GM12878 (cell line): ENCODE measurements at regions of chr3 and their contacts with region 1.

Region 1: GRCh38 chr3:169931747-169932520 is 20.6 kb downstream of the SAMD7 start:
- DNase-seq: peak; percentile 85
- ATAC-seq: peak; percentile 94
- H3K4me3 ChIP-seq: peak overlapping the region; percentile 18; the same call in 1 of the 2 replicates
- H3K27ac ChIP-seq: peak overlapping the region; percentile 79
- H3K4me1 ChIP-seq: peaks cover 33% of the 10 kb centered on the region
- H3K27me3 ChIP-seq: no peaks in the 10 kb centered on the region
- CTCF ChIP-seq: no peak
- EP300 ChIP-seq: peak in 1 of 2 experiments; percentile 67; a peak in 2 of 4 replicates
- POLR2A ChIP-seq: peak; percentile 48; the same call in 1 of the 2 replicates
- RAD21 ChIP-seq: peak; percentile 22

Region 2: DNA sequence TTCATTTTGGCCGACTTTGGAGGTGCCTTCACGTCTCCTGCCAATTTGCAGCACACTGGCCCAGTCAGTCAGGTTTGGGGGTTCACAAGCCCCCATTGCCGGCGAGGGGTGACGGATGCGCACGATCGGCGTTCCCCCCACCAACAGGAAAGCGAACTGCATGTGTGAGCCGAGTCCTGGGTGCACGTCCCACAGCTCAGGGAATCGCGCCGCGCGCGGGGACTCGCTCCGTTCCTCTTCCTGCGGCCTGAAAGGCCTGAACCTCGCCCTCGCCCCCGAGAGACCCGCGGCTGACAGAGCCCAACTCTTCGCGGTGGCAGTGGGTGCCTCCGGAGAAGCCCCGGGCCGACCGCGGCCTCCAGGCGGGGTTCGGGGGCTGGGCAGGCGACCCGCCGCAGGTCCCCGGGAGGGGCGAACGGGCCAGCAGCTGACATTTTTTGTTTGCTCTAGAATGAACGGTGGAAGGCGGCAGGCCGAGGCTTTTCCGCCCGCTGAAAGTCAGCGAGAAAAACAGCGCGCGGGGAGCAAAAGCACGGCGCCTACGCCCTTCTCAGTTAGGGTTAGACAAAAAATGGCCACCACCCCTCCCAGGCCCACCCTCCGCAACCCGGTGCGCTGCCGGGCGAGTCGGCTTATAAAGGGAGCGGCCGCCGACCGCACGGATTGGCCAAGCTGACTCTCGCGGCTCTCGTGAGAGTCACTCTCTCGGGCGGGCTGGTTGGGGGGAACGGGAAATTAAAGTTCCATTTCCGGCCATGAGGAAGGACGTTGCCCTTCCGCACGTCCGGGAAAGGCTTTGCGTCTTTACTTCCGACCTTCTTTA is 167.3 kb before region 1 on chr3 and contains the start of gene TERC:
- CTCF ChIA-PET with region 1: interaction called, 7 read pairs
- POLR2A ChIA-PET with region 1: interaction called, 3 read pairs
- RAD21 ChIA-PET with region 1: interaction called, 3 read pairs
- SMC1A ChIA-PET with region 1: interaction called, 10 read pairs
- in situ Hi-C with region 1: no loop called
- intact Hi-C with region 1: no loop called
- DNase-seq: peak; percentile 66
- ATAC-seq: peak; percentile 92
- H3K4me3 ChIP-seq: peak within 1 kb of the TSS; percentile 68
- H3K27ac ChIP-seq: peak within 1 kb of the TSS; percentile 71
- H3K4me1 ChIP-seq: no peaks in the 10 kb centered on the region
- H3K27me3 ChIP-seq: no peaks in the 10 kb centered on the region
- CTCF ChIP-seq: no peak
- EP300 ChIP-seq: no peak
- POLR2A ChIP-seq: peak; percentile 82
- RAD21 ChIP-seq: no peak
- polyA plus RNA-seq, gene TERC: not detected

Region 3: DNA sequence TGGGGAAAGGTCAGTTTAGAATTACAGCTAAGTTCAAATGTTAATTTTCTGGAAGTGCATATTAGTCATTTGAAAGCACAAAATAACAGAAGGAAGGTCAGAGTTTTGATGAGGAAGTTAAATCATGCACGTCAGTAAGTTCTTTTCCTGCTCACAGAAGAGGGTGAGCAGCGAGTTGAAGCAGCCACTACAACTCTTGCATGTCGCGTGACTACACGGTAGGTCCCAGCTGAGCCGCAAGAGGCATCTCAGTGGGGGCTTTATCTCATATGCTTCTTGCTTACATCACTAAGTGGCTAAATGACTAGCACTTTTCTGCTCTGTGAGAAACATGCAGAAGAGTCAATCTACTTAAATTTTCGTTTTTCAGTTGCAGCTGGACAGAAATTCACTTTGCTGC is 13.4 kb after region 1 on chr3:
- CTCF ChIA-PET with region 1: interaction called, 12 read pairs
- POLR2A ChIA-PET with region 1: interaction called, 5 read pairs
- RAD21 ChIA-PET with region 1: interaction called, 13 read pairs
- SMC1A ChIA-PET with region 1: interaction called, 45 read pairs
- in situ Hi-C with region 1: no loop called
- intact Hi-C with region 1: no loop called
- DNase-seq: peak; percentile 85
- ATAC-seq: peak; percentile 91
- H3K4me3 ChIP-seq: peak overlapping the region; percentile 48; the same call in 1 of the 2 replicates
- H3K27ac ChIP-seq: peak overlapping the region; percentile 93
- H3K4me1 ChIP-seq: peaks cover 62% of the 10 kb centered on the region
- H3K27me3 ChIP-seq: no peaks in the 10 kb centered on the region
- CTCF ChIP-seq: peak in 1 of 3 experiments; percentile 8; a peak in 1 of 6 replicates
- EP300 ChIP-seq: peak; percentile 98 to 99
- POLR2A ChIP-seq: peak; percentile 45; the same call in 1 of the 2 replicates
- RAD21 ChIP-seq: 0 out of 2 replicates have a peak, but pooled peaks have one; percentile 13

Region 4: DNA sequence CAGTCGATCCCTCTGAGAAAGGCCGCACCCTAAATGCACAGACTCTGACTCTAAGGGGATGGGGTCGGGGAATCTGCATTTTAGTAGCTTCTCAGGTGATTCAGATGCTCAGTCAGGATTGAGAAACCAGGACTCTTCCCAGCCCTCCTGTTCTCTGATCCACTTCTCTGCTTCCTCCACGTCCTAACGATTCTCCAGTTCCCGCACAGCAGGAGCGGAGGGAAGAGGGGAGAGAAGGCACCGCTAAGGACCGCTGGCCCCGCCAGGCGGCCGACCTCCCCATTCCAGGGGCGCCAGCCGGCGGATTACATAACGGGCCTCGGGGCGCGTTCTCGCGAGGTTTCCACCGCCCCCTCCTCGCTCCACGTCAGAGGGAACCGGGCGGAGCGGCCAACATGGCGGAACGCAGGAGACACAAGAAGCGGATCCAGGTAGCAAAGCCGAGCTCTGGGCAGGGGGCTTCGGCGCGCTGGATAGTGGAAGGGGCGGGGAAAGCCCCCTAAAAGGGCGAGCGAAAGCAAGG is 34.6 kb after region 1 on chr3 and contains the start of gene SEC62:
- CTCF ChIA-PET with region 1: interaction called, 81 read pairs
- POLR2A ChIA-PET with region 1: interaction called, 10 read pairs
- RAD21 ChIA-PET with region 1: interaction called, 48 read pairs
- SMC1A ChIA-PET with region 1: interaction called, 118 read pairs
- in situ Hi-C with region 1: no loop called
- intact Hi-C with region 1: loop called (anchors 1 kb)
- DNase-seq: peak; percentile 65
- ATAC-seq: peak; percentile 89
- H3K4me3 ChIP-seq: peak within 1 kb of the TSS; percentile 79
- H3K27ac ChIP-seq: peak within 1 kb of the TSS; percentile 91
- H3K4me1 ChIP-seq: peaks cover 7% of the 10 kb centered on the region; the same call in 1 of the 2 replicates
- H3K27me3 ChIP-seq: no peaks in the 10 kb centered on the region
- CTCF ChIP-seq: peak; percentile 57 to 75 (median 64)
- EP300 ChIP-seq: no peak; a peak in 1 of 4 replicates
- POLR2A ChIP-seq: peak; percentile 95
- RAD21 ChIP-seq: peak; percentile 74
- polyA plus RNA-seq, gene SEC62: 252 to 270 TPM

Region 5: GRCh38 chr3:170055209-170055608 is 123.3 kb after region 1 on chr3:
- CTCF ChIA-PET with region 1: interaction called, 39 read pairs
- POLR2A ChIA-PET with region 1: interaction called, 3 read pairs
- RAD21 ChIA-PET with region 1: interaction called, 9 read pairs
- SMC1A ChIA-PET with region 1: interaction called, 13 read pairs
- in situ Hi-C with region 1: no loop called
- intact Hi-C with region 1: loop called (anchors 1 kb)
- DNase-seq: peak; percentile 63
- ATAC-seq: peak; percentile 73
- H3K4me3 ChIP-seq: peak overlapping the region; percentile 59
- H3K27ac ChIP-seq: peak overlapping the region; percentile 94
- H3K4me1 ChIP-seq: peaks cover 42% of the 10 kb centered on the region
- H3K27me3 ChIP-seq: no peaks in the 10 kb centered on the region
- CTCF ChIP-seq: 0 out of 6 replicates have a peak, but pooled peaks of 1 of the 3 experiments have one; percentile 2
- EP300 ChIP-seq: peak; percentile 35 to 36; a peak in 1 of 4 replicates
- POLR2A ChIP-seq: peak; percentile 24; the same call in 1 of the 2 replicates
- RAD21 ChIP-seq: no peak

Region 6: DNA sequence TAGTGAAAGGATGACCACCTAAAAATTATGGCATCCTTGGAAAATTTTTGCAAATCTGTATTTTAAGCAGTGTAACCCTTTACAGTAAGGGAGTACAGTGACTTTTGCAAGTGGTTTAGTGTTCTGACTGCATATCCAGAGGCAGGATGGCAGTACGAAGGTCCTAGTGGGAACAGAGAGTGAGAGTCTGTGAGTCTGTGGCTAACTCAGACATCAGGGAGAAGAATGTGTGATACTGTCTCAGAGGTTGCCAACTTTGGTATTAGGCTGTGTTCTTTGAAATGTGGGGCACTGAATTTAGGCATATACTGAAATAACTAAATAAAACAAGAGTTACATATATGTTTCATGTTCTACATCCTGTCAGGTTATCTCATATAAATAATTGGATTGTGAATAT is 315.9 kb after region 1 on chr3:
- CTCF ChIA-PET with region 1: no interaction called
- POLR2A ChIA-PET with region 1: no interaction called
- RAD21 ChIA-PET with region 1: no interaction called
- SMC1A ChIA-PET with region 1: no interaction called
- in situ Hi-C with region 1: no loop called
- intact Hi-C with region 1: no loop called
- DNase-seq: no peak
- ATAC-seq: peak; percentile 75
- H3K4me3 ChIP-seq: no peak overlapping the region
- H3K27ac ChIP-seq: peak overlapping the region; percentile 38; the same call in 1 of the 2 replicates
- H3K4me1 ChIP-seq: peaks cover 7% of the 10 kb centered on the region; the same call in 1 of the 2 replicates
- H3K27me3 ChIP-seq: no peaks in the 10 kb centered on the region
- CTCF ChIP-seq: no peak
- EP300 ChIP-seq: no peak
- POLR2A ChIP-seq: no peak
- RAD21 ChIP-seq: no peak